MCF 10A (cell line): ENCODE measurements at regions of chr15 and their contacts with region 1.

Region 1: GRCh38 chr15:77496710-77497103 is 76.0 kb downstream of the HMG20A start:
- DNase-seq: peak; percentile 92
- H3K4me3 Mint-ChIP-seq: no peak overlapping the region
- H3K27ac Mint-ChIP-seq: no peak overlapping the region
- H3K4me1 Mint-ChIP-seq: peaks cover 24% of the 10 kb centered on the region
- H3K27me3 Mint-ChIP-seq: no peaks in the 10 kb centered on the region
- CTCF ChIP-seq: peak; percentile 98

Region 2: GRCh38 chr15:77024271-77025082 is 472.2 kb before region 1 on chr15:
- CTCF ChIA-PET with region 1: interaction called, 6 read pairs
- POLR2A ChIA-PET with region 1: no interaction called
- intact Hi-C with region 1: loop called (anchors 1 kb)
- DNase-seq: peak; percentile 53
- H3K4me3 Mint-ChIP-seq: no peak overlapping the region
- H3K27ac Mint-ChIP-seq: no peak overlapping the region
- H3K4me1 Mint-ChIP-seq: peaks cover 9% of the 10 kb centered on the region
- H3K27me3 Mint-ChIP-seq: no peaks in the 10 kb centered on the region
- CTCF ChIP-seq: peak; percentile 97

Region 3: DNA sequence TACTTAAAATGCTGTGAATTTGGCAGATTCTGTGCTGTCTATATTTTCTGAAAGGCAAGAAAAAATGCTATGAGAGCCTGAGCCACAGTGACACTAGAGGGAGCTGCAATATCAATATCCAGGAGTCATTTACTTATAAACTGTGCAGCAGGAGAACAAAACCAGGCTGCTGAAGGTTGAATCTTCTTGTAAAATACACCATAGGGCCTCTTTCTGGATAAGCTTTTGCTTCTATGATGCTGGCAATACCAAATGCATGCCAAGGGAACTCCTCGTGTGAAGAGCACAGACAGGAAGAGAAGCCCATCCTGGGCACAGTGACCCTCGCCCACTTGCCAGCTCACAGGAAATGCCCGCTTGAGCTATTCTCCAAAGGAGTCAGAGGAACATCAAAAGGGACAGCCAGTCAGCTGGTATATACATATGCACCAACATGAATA is 377.8 kb before region 1 on chr15:
- CTCF ChIA-PET with region 1: interaction called, 49 read pairs
- POLR2A ChIA-PET with region 1: no interaction called
- intact Hi-C with region 1: loop called (anchors 1 kb)
- DNase-seq: peak; percentile 66
- H3K4me3 Mint-ChIP-seq: no peak overlapping the region
- H3K27ac Mint-ChIP-seq: no peak overlapping the region
- H3K4me1 Mint-ChIP-seq: no peaks in the 10 kb centered on the region
- H3K27me3 Mint-ChIP-seq: no peaks in the 10 kb centered on the region
- CTCF ChIP-seq: peak; percentile 64

Region 4: GRCh38 chr15:77186594-77187011 is 310.1 kb before region 1 on chr15:
- CTCF ChIA-PET with region 1: interaction called, 26 read pairs
- POLR2A ChIA-PET with region 1: interaction called, 8 read pairs
- intact Hi-C with region 1: loop called (anchors 1 kb)
- DNase-seq: peak; percentile 39
- H3K4me3 Mint-ChIP-seq: no peak overlapping the region
- H3K27ac Mint-ChIP-seq: no peak overlapping the region
- H3K4me1 Mint-ChIP-seq: no peaks in the 10 kb centered on the region
- H3K27me3 Mint-ChIP-seq: no peaks in the 10 kb centered on the region
- CTCF ChIP-seq: peak; percentile 48

Region 5: DNA sequence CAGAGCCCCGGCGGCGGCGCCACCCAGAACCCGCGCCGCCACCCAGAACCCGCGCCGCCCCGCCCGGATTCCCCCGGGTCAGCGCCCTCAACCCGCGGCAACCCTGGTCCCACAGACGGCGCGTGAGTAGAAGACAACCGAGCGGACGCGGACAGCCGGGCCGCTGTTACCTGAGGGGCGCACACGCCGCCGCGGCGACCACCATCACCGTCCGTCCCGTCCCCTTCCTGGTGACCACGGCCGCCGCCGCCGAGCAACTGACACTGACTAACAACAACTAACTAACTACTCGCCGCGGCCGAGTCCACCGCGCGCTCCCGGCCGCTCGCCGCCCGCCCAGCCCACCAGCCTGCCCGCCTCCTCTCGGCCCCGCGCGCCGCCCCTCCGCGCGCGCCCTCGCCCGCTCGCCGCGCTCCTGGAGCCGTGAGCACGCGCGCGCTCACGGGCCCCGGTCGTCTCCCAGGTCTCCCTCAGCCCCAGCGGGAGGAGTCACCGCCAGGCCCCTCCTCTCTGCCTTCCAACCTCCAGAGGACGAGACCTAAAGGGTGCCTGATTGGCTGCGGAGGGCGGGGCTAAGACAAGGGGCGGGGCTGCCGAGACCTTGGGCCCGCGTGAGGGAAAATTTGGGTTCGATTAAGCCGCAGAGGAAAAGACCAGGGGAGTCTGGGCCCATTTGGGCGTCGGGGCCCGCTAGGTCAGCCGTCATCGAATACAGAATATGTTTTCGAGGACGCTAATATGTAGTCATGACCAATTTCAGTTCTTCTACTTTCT is 76.7 kb before region 1 on chr15 and contains the start of gene PEAK1:
- CTCF ChIA-PET with region 1: interaction called, 6 read pairs
- POLR2A ChIA-PET with region 1: interaction called, 7 read pairs
- intact Hi-C with region 1: loop called (anchors 2 kb)
- DNase-seq: peak; percentile 99
- H3K4me3 Mint-ChIP-seq: peak within 1 kb of the TSS; percentile 89
- H3K27ac Mint-ChIP-seq: peak within 1 kb of the TSS; percentile 98
- H3K4me1 Mint-ChIP-seq: peaks cover 41% of the 10 kb centered on the region
- H3K27me3 Mint-ChIP-seq: no peaks in the 10 kb centered on the region
- CTCF ChIP-seq: no peak
- total RNA-seq, gene PEAK1: 17.5 and 20.0 TPM in 2 replicates

Region 6: DNA sequence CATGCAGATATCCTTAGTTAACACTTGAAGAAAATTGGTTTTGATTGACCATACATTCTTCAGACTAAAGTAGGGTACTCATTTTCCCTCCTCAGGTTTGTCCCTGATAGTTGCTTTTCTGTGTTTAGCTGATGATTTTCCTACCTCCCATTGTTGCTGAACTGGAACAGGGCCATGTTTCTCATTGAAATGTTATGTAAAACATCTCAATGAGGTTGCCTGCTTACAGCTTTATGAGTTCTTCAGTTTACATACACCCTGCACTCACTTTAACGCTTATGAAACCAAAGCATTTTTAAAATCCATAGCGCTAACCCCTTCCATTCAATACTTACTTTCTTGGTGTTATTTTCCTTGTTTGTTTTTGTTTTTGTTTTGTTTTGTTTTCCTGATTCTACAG is 14.1 kb before region 1 on chr15:
- CTCF ChIA-PET with region 1: interaction called, 15 read pairs
- POLR2A ChIA-PET with region 1: interaction called, 5 read pairs
- intact Hi-C with region 1: no loop called
- DNase-seq: peak; percentile 50
- H3K4me3 Mint-ChIP-seq: no peak overlapping the region
- H3K27ac Mint-ChIP-seq: no peak overlapping the region
- H3K4me1 Mint-ChIP-seq: peaks cover 20% of the 10 kb centered on the region
- H3K27me3 Mint-ChIP-seq: no peaks in the 10 kb centered on the region
- CTCF ChIP-seq: no peak

Region 7: GRCh38 chr15:77507911-77508310 is 11.2 kb after region 1 on chr15:
- CTCF ChIA-PET with region 1: interaction called, 6 read pairs
- POLR2A ChIA-PET with region 1: interaction called, 18 read pairs
- intact Hi-C with region 1: no loop called
- DNase-seq: peak; percentile 65
- H3K4me3 Mint-ChIP-seq: no peak overlapping the region
- H3K27ac Mint-ChIP-seq: peak overlapping the region; percentile 88
- H3K4me1 Mint-ChIP-seq: peaks cover 55% of the 10 kb centered on the region
- H3K27me3 Mint-ChIP-seq: no peaks in the 10 kb centered on the region
- CTCF ChIP-seq: no peak